Heart right ventricle (tissue), 16 donors: ENCODE measurements at regions of chr14 and their contacts with region 1.

Region 1: DNA sequence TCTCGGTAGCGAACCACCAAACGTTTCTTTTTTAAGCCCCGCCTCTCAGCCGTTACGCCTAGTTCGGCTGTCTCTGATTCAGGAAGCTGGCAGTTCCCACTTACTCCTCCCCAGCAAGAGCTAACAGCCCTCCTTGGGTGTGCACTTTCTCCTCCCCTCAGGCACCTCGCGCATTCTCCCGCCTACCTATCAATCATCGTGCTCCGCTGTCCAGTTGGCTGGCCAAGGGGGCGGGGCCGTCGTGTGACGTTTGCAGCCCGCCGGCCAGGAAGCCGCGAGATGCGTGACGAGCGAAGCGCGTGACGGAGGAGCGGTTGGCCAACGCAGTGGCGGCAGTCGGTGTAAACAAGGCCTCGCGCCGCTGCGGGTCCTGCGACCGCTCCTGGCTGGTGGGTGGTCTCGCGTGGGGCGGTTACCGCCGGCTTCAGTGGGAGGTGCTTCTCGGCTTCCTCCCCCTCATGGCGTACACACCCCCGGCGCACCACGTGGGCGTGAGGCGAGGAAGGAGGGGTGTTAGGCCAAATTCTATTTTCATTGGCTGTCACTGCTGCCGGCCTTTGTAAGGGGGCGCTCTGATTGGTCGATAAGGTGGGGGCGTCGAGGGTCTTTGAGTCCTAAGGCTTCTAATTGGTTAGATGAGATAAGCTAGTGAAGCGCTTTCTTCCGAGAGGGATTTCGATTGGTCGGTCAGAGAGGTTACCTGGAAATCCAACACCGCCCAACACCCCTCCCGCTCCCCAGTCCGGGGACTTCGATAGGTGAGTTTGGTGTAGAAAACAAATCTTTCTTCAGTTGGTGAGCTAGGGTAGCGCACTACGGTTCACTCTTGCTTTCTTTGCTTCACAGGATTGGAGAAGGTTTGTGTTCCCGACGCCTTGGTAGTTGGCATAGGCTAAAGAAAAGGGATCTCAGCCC is at the starts of genes DCAF11 and NRL:
- DNase-seq: peak; percentile 98 to 99
- ATAC-seq: peak; percentile 94 to 96 (median 96)
- H3K4me3 ChIP-seq: peak within 1 kb of the TSS; percentile 34 to 80 (median 69)
- H3K27ac ChIP-seq: peak within 1 kb of the TSS; percentile 90 to 99 (median 98)
- H3K4me1 ChIP-seq: peaks cover 6 to 32% (median 17%) of the 10 kb centered on the region in 9 donors
- H3K27me3 ChIP-seq: no peaks in the 10 kb centered on the region
- CTCF ChIP-seq: peak in 2 of 9 donors; percentile 6 to 15
- total RNA-seq, gene DCAF11: 62.2 to 99.7 (median 73.0) TPM
- total RNA-seq, gene NRL: 1.7 to 3.5 (median 2.2) TPM

Region 2: GRCh38 chr14:24130717-24131548 is 16.1 kb after region 1 on chr14:
- intact Hi-C with region 1: loop called in 3 of 10 experiments (anchors 1 to 2 kb)
- DNase-seq: peak; percentile 77 to 83
- ATAC-seq: peak; percentile 52 to 87 (median 78)
- H3K4me3 ChIP-seq: peak overlapping the region in 9 of 10 donors; percentile 10 to 50 (median 41)
- H3K27ac ChIP-seq: peak overlapping the region; percentile 81 to 98 (median 94)
- H3K4me1 ChIP-seq: peaks cover 14 to 41% (median 26%) of the 10 kb centered on the region in 9 donors
- H3K27me3 ChIP-seq: no peaks in the 10 kb centered on the region
- CTCF ChIP-seq: no peak

Region 3: GRCh38 chr14:24141097-24141880 is 26.5 kb after region 1 on chr14 and contains the start of gene EMC9:
- intact Hi-C with region 1: loop called in 4 of 10 experiments (anchors 2 to 5 kb)
- DNase-seq: peak; percentile 100
- ATAC-seq: peak; percentile 92 to 97 (median 95)
- H3K4me3 ChIP-seq: peak within 1 kb of the TSS; percentile 66 to 88 (median 74)
- H3K27ac ChIP-seq: peak within 1 kb of the TSS; percentile 73 to 94 (median 90)
- H3K4me1 ChIP-seq: peaks cover 22 to 81% (median 53%) of the 10 kb centered on the region in 9 donors
- H3K27me3 ChIP-seq: no peaks in the 10 kb centered on the region
- CTCF ChIP-seq: peak; percentile 38 to 78 (median 63)
- total RNA-seq, gene EMC9: 10.2 to 18.8 (median 13.3) TPM

Region 4: GRCh38 chr14:24146978-24147760 is 32.4 kb after region 1 on chr14 and contains the start of gene RNF31:
- intact Hi-C with region 1: loop called in 3 of 10 experiments (anchors 2 to 5 kb)
- DNase-seq: peak; percentile 97 to 99
- ATAC-seq: peak; percentile 92 to 98 (median 95)
- H3K4me3 ChIP-seq: peak within 1 kb of the TSS; percentile 75 to 96 (median 84)
- H3K27ac ChIP-seq: peak within 1 kb of the TSS; percentile 79 to 97 (median 94)
- H3K4me1 ChIP-seq: peaks cover 16 to 57% (median 30%) of the 10 kb centered on the region in 9 donors
- H3K27me3 ChIP-seq: no peaks in the 10 kb centered on the region
- CTCF ChIP-seq: no peak
- total RNA-seq, gene RNF31: 27.5 to 52.6 (median 34.8) TPM

Region 5: DNA sequence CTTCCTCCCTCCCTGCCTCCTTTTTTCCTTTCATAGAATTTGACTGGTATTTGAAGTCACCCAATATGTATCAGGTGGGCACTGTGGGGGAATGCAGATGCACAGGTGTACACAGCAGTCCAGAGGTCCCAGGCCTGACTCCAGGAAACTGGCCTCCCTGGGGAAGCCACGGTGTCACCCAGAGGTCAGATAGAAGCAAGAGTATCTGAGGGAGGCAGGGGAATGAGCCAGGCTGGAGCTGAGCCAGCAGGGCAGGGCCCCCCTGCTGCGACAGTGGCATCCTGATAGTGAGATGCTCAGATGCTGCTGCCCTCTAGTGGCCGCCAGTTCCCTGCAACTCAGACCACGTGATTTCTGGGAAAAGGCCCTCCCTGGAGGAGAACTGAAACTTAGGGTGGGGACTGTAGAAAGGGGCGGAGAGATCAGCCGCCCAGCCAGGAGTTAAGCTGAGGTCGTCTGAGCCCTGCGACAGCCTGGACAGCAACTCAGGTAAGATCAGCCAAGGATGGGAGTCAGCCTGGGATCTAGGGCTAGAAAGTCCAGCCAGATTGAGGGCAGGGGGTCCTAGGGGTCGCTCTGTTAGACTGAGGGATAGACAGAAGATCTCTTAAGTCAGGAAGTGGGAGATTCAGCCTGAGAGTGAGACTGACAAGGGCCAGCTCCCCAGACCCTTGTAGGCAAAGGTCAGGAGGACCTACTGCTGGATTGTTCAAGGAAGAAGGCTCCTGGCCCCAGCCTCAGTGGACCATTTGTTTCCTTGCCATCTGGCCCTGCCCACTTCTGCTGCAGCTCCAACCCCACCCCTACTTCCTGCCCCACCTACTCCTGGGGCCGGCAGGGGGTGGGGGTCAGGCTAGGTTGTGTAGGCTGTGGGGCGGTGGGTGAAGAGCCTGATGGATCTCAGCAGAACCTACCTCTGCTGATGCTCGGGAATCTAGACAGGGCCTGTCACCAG is 46.3 kb after region 1 on chr14 and contains the start of gene IRF9:
- intact Hi-C with region 1: loop called in 1 of 10 experiments (anchors 5 kb)
- DNase-seq: peak; percentile 96 to 97
- ATAC-seq: peak; percentile 89 to 97 (median 96)
- H3K4me3 ChIP-seq: peak within 1 kb of the TSS; percentile 50 to 89 (median 66)
- H3K27ac ChIP-seq: peak within 1 kb of the TSS; percentile 92 to 100 (median 96)
- H3K4me1 ChIP-seq: peaks cover 9 to 50% (median 27%) of the 10 kb centered on the region in 9 donors
- H3K27me3 ChIP-seq: no peaks in the 10 kb centered on the region
- CTCF ChIP-seq: peak; percentile 90 to 98 (median 92)
- total RNA-seq, gene IRF9: 17.7 to 147 (median 36.7) TPM

Region 6: DNA sequence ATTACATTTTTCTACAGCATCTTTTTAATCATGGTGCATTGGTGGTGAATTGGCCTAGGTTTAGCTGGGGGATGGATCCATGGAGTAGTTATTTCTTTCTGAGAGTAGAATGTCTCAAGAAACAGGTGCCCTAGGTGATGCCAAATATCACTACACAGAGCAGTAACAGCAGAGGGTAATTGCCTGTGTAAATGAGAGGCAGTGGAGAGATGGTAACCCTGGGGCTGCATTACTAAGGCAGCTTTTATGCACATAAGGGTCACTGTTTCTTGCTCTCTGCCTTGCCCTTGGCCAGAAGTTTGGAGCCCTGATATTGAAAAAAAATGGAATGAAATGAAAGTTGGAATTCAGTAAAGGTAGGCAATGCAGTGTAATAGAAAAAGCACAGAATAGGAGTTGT is 1879.0 kb after region 1 on chr14:
- intact Hi-C with region 1: no loop called
- DNase-seq: no peak
- ATAC-seq: no peak
- H3K4me3 ChIP-seq: no peak overlapping the region
- H3K27ac ChIP-seq: no peak overlapping the region
- H3K4me1 ChIP-seq: no peaks in the 10 kb centered on the region
- H3K27me3 ChIP-seq: no peaks in the 10 kb centered on the region
- CTCF ChIP-seq: no peak